ENCODE measurements at regions of chr2 and their contacts with region 1.

Region 1: GRCh38 chr2:204871231-204871953 is 326.1 kb downstream of the PARD3B start:
- DNase-seq: peak; percentile 23
- H3K4me3 ChIP-seq: no peak overlapping the region
- H3K27ac ChIP-seq: no peak overlapping the region
- H3K4me1 ChIP-seq: peaks cover 0 to 3% of the 10 kb centered on the region in 2 experiments; a peak in 2 of 4 replicates
- H3K27me3 ChIP-seq: no peaks in the 10 kb centered on the region
- CTCF ChIP-seq: peak; percentile 63
- EP300 ChIP-seq: no peak
- RAD21 ChIP-seq: peak; percentile 90

Region 2: GRCh38 chr2:204881655-204882054 is 10.3 kb after region 1 on chr2:
- CTCF ChIA-PET with region 1: interaction called, 11 read pairs
- POLR2A ChIA-PET with region 1: no interaction called
- DNase-seq: no peak
- H3K4me3 ChIP-seq: no peak overlapping the region
- H3K27ac ChIP-seq: no peak overlapping the region
- H3K4me1 ChIP-seq: peaks cover 0 to 4% of the 10 kb centered on the region in 2 experiments; a peak in 2 of 4 replicates
- H3K27me3 ChIP-seq: no peaks in the 10 kb centered on the region
- CTCF ChIP-seq: no peak
- EP300 ChIP-seq: no peak
- RAD21 ChIP-seq: no peak

Measured in SK-N-SH (cell line).